Posterior cingulate gyrus (tissue), 11 donors: ENCODE measurements at regions of chr1 and their contacts with region 1.

Region 1: GRCh38 chr1:13807213-13807612 is 107.2 kb downstream of the PRDM2 start:
- DNase-seq: peak in 2 of 10 donors; percentile 57 to 88

Region 2: DNA sequence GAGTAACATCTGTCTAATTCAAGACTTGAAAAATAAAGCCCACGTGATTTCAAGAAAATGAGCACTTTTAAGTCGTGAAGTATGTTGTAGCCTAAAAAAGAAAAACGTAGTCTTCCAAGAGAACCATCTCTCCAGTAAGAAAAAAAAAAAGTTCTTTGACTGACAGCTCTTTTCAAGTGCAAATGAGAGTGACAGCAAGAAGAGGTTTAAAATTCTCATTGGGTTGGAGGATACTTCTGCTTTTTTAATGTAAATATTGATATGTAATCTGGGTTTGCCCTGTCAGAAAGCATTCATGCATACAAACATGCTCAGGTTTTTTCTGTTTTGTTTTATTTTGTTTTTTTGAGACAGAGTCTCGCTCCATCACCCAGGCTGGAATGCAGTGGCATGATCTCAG is 139.5 kb before region 1 on chr1:
- intact Hi-C with region 1: loop called (anchors 5 kb)
- DNase-seq: no peak

Region 3: GRCh38 chr1:13759088-13759487 is 48.1 kb before region 1 on chr1:
- intact Hi-C with region 1: loop called (anchors 5 kb)
- DNase-seq: no peak